Activated naive CD4-positive, alpha-beta T cell treated with anti-CD3 and anti-CD28 coated beads for 36 hours (primary cell): ENCODE measurements at regions of chr1 and their contacts with region 1.

Region 1: DNA sequence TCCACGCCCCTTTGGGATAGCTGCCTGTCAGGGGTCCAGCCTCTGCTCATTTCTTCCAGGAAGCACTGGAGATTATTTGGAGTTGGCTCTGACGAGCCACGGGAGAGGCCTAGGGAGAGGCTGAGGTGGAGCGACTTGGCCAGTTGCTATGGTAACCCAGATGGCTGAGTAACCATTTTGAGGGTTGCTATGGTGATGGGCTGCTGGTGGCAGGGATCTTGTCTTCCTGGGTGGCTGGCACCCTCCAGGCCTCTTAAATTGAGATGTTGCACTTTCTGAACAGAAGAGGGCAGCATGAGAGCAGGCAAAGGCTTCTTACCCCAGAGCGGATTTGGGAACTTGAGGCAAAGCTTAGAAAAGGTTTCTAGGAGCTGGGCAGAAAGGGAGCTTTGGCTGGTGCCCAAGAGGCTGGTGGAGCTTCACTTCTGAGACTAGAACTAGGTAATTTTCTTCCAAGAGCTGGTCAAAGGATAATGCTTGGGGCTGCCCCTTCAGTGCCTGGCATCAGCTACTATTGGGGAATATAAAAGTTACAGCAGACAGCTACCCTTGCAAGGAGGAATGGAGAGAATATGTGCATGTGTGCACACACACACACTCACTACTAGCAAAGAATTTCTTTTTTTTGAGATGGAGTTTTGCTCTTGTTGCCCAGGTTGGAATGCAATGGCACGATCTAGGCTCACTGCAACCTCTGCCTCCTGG is 72.5 kb downstream of the NDUFS5 start:
- DNase-seq: peak; percentile 73
- H3K4me3 Mint-ChIP-seq: no peak overlapping the region
- H3K27ac Mint-ChIP-seq: no peak overlapping the region
- H3K4me1 Mint-ChIP-seq: peaks cover 21% of the 10 kb centered on the region
- H3K27me3 Mint-ChIP-seq: no peaks in the 10 kb centered on the region

Region 2: DNA sequence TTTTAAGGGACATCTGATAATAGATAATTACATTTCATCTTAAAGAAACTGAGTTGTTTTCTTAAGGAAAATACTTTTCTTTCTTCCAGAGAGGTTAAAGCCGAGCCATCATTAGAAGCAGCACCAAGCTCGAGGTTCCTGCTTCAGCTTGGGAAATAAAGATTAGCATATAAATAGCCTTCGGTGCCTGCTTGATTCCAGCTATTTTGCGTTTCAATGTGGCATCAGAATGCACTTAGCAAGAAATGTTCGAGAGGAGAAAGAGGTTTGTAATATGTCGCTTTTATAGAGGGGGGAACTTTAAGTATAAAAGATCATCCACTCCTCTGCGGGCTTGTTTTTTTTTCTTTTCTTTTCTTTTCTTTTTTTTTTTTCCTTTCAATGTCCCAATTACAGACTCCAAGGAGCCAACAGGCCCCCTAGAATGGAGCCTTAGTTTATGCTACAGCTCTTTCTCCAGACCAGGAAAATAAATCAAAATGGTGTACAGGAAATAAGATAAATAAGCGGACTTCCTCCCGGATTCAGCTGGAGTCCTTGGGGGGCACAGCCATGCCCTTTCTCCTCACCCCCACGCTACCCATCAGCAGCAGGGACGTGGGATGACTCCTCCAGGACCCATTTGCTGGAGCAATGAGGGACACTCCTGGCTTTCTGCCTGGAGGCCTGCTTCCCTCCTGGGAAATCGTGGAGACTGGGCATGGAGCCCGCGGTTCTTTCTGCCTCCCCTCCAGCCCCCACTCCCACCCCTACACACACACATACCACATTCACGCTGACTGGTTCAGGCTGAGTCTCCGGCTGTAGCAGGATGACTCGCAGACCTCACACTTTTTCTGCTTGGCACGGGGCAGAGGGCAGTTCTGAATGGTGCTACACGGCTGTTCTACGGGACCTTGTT is 370.8 kb before region 1 on chr1:
- CTCF ChIA-PET with region 1: no interaction called
- intact Hi-C with region 1: loop called (anchors 10 kb)
- DNase-seq: peak; percentile 14
- H3K4me3 Mint-ChIP-seq: no peak overlapping the region
- H3K27ac Mint-ChIP-seq: no peak overlapping the region
- H3K4me1 Mint-ChIP-seq: no peaks in the 10 kb centered on the region
- H3K27me3 Mint-ChIP-seq: peaks cover 64% of the 10 kb centered on the region

Region 3: DNA sequence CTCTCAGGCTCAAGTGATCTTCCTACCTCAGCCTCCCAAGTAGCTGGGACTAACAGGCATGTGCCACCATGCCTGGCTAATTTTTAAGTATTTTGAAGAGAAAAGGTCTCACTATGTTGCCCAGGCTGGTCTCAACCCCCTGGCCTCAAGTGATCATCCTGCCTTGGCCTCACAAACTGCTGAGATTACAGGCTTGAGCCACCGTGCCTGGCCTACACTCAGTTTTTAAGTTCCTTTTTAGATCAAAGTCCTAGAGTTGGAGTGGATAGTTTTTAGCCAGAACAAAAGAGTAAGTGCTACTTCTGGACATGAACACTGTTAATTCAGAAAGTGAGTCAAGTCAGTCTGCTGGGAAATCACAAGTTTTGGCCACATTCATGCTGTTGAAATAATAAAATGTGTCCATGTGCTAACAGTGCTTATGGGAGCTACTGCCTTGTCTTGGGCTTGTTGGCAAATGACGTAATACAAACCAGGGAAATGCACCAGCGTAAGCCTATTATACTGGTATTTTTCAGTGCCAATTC is 11.7 kb after region 1 on chr1:
- CTCF ChIA-PET with region 1: interaction called, 11 read pairs
- intact Hi-C with region 1: no loop called
- DNase-seq: no peak
- H3K4me3 Mint-ChIP-seq: no peak overlapping the region
- H3K27ac Mint-ChIP-seq: no peak overlapping the region
- H3K4me1 Mint-ChIP-seq: peaks cover 20% of the 10 kb centered on the region
- H3K27me3 Mint-ChIP-seq: peaks cover 9% of the 10 kb centered on the region

Region 4: GRCh38 chr1:39258146-39258924 is 159.6 kb after region 1 on chr1:
- CTCF ChIA-PET with region 1: interaction called, 15 read pairs
- intact Hi-C with region 1: loop called (anchors 1 kb)
- DNase-seq: peak; percentile 80
- H3K4me3 Mint-ChIP-seq: no peak overlapping the region
- H3K27ac Mint-ChIP-seq: peak overlapping the region; percentile 50
- H3K4me1 Mint-ChIP-seq: peaks cover 33% of the 10 kb centered on the region
- H3K27me3 Mint-ChIP-seq: no peaks in the 10 kb centered on the region

Region 5: DNA sequence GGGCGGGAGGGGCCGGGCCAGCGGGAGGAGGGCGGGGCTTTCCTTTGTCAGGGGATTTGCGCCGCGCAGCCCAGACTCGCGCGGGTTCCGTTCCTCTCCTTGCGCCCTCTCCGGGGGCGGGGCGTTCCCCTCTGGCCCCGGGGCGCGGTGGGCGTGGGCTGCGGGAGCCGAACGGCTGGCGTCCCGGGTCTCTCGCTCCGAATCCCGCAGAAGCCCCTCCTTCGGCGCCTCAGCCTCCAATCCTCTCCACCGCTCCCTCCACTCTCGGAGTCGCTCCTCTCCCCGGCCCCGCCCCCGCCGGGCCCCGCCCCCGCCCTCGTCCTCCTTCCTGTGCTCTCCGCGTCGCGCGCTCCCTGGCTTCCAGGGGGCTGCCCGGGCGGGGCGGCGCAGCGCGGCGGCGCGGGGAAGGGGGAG is 309.9 kb after region 1 on chr1:
- CTCF ChIA-PET with region 1: interaction called, 9 read pairs
- intact Hi-C with region 1: loop called (anchors 1 kb)
- DNase-seq: peak; percentile 82
- H3K4me3 Mint-ChIP-seq: peak overlapping the region; percentile 81
- H3K27ac Mint-ChIP-seq: no peak overlapping the region
- H3K4me1 Mint-ChIP-seq: peaks cover 60% of the 10 kb centered on the region
- H3K27me3 Mint-ChIP-seq: no peaks in the 10 kb centered on the region

Region 6: GRCh38 chr1:39653546-39654031 is 554.9 kb after region 1 on chr1:
- CTCF ChIA-PET with region 1: interaction called, 5 read pairs
- intact Hi-C with region 1: loop called (anchors 5 kb)
- DNase-seq: peak; percentile 90
- H3K4me3 Mint-ChIP-seq: no peak overlapping the region
- H3K27ac Mint-ChIP-seq: no peak overlapping the region
- H3K4me1 Mint-ChIP-seq: peaks cover 8% of the 10 kb centered on the region
- H3K27me3 Mint-ChIP-seq: peaks cover 8% of the 10 kb centered on the region